ENCODE measurements at regions of chr17 and their contacts with region 1.

Region 1: GRCh38 chr17:82863941-82864774 is 24.3 kb upstream of the ZNF750 start:
- DNase-seq: peak; percentile 85
- ATAC-seq: peak; percentile 83
- H3K4me3 ChIP-seq: peak overlapping the region in 2 of 5 experiments; percentile 9 to 18
- H3K4me3 Mint-ChIP-seq: peak overlapping the region; percentile 85
- H3K27ac ChIP-seq: peak overlapping the region; percentile 3 to 46
- H3K27ac Mint-ChIP-seq: peak overlapping the region; percentile 93
- H3K4me1 ChIP-seq: peaks cover 66 to 71% of the 10 kb centered on the region in 2 donors
- H3K4me1 Mint-ChIP-seq: peaks cover 78% of the 10 kb centered on the region
- H3K27me3 ChIP-seq: peaks cover 0 to 18% (median 0%) of the 10 kb centered on the region in 4 experiments
- H3K27me3 Mint-ChIP-seq: peaks cover 8% of the 10 kb centered on the region
- CTCF ChIP-seq: no peak

Region 2: DNA sequence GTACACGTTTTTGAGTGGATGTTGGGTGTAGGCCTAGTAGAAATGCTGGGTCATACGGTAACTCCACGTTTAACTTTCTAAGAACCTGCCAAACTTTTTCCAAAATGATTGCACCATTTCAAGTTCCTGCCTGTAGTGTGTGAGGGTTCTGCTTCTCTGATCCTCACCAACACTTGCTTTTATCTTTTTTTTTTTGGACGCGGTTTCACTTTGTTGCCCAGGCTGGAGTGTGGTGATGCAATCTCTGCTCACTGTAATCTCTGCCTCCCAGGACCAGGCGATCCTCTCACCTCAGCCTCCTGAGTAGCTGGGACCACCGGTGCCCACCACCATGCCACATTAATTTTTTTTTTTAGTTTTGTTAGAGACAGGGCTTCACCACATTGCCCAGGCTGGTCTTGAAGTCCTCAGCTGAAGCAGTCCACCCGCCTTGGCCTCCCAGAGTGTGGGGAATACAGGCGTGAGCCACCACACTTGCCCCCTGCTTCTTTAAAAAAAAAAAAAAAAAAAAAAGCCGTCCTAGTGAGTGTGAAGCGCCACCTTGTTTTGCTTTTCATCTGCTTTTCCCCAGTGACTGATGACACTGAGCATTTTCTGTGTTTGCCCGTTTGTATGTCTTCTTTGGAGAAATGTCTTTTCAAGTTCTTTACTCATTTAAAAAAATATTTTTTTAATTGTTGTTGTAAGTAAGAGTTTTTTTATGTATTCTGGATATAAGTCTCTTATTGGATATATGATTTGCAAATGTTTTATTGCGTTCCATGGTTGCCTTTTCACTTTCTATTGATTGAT is 47.6 kb before region 1 on chr17:
- CTCF ChIA-PET with region 1: interaction called, 39 read pairs
- POLR2A ChIA-PET with region 1: interaction called, 10 read pairs
- intact Hi-C with region 1: loop called (anchors 1 kb)
- DNase-seq: no peak
- ATAC-seq: no peak
- H3K4me3 ChIP-seq: no peak overlapping the region
- H3K4me3 Mint-ChIP-seq: no peak overlapping the region
- H3K27ac ChIP-seq: no peak overlapping the region
- H3K27ac Mint-ChIP-seq: peak overlapping the region; percentile 20
- H3K4me1 ChIP-seq: peaks cover 24 to 34% of the 10 kb centered on the region in 2 donors
- H3K4me1 Mint-ChIP-seq: peaks cover 34% of the 10 kb centered on the region
- H3K27me3 ChIP-seq: no peaks in the 10 kb centered on the region
- H3K27me3 Mint-ChIP-seq: no peaks in the 10 kb centered on the region
- CTCF ChIP-seq: no peak

Region 3: DNA sequence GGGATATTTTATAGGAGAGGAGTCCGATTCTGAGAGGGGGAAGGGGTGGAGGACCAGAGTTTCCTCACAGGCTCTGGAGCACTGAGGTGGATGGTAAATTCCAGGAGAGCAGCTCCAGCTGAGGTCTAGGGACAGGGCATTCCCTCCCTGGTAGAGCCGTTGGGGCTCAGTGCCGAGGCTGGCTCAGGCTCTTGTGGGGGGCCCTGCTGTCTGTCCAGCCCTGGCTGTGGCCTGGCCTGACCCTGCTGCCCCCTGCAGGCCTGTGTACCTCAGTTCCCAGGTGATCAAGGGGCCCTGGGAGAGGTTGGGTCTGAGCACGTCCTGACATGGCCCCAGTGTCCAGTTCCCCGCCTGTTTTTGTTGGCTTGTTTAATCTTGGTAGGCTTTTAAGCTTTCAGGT is 41.2 kb before region 1 on chr17:
- CTCF ChIA-PET with region 1: interaction called, 39 read pairs
- POLR2A ChIA-PET with region 1: interaction called, 10 read pairs
- intact Hi-C with region 1: loop called (anchors 1 kb)
- DNase-seq: no peak
- ATAC-seq: no peak
- H3K4me3 ChIP-seq: no peak overlapping the region
- H3K4me3 Mint-ChIP-seq: no peak overlapping the region
- H3K27ac ChIP-seq: no peak overlapping the region
- H3K27ac Mint-ChIP-seq: no peak overlapping the region
- H3K4me1 ChIP-seq: peaks cover 18 to 19% of the 10 kb centered on the region in 2 donors
- H3K4me1 Mint-ChIP-seq: peaks cover 24% of the 10 kb centered on the region
- H3K27me3 ChIP-seq: no peaks in the 10 kb centered on the region
- H3K27me3 Mint-ChIP-seq: no peaks in the 10 kb centered on the region
- CTCF ChIP-seq: peak; percentile 9

Region 4: GRCh38 chr17:82836823-82837357 is 27.3 kb before region 1 on chr17:
- CTCF ChIA-PET with region 1: interaction called, 11 read pairs
- POLR2A ChIA-PET with region 1: interaction called, 3 read pairs
- intact Hi-C with region 1: no loop called
- DNase-seq: no peak
- ATAC-seq: no peak
- H3K4me3 ChIP-seq: no peak overlapping the region
- H3K4me3 Mint-ChIP-seq: no peak overlapping the region
- H3K27ac ChIP-seq: no peak overlapping the region
- H3K27ac Mint-ChIP-seq: no peak overlapping the region
- H3K4me1 ChIP-seq: no peaks in the 10 kb centered on the region
- H3K4me1 Mint-ChIP-seq: no peaks in the 10 kb centered on the region
- H3K27me3 ChIP-seq: no peaks in the 10 kb centered on the region
- H3K27me3 Mint-ChIP-seq: no peaks in the 10 kb centered on the region
- CTCF ChIP-seq: no peak

Region 5: DNA sequence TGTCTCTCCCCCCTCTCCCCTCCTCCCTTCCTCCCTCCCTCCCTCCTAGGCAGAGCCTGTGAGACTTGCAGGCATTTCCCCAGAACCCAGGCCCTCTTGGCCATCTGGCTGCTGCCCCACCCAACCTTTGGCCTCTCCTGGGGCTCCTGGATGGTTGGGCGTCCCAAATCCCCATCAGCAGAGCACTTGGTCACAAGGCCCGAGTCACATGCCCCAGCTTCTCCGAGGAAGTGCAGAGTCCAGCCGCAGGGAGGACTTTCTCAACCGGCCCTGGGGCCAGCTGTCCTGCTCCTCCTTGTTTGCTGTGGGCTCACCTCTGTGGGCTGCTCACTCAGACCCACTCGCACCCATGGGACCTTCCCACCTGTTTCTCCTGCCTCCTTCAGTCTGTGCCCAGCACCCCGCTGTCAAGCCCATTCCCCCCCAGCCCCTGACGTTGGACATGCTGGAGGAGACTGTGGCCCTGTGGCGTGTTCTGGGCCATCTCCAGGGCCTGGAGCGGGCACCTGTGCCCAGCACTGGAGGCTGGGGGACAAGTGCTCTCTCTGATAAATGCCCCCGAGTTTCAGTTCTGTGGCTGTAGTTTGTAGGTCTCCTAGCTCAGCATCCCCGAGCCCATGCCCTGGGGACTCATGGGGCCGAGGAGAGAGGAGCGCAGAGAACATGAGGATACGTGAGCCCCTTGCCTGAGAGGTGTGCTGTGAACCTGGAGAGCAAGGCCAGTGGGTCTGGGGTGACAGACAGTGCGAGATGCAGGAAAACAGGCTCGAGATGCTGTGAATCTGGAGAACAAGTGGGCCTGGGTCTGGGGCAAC is 17.9 kb after region 1 on chr17:
- CTCF ChIA-PET with region 1: interaction called, 11 read pairs
- POLR2A ChIA-PET with region 1: interaction called, 12 read pairs
- intact Hi-C with region 1: no loop called
- DNase-seq: no peak
- ATAC-seq: no peak
- H3K4me3 ChIP-seq: no peak overlapping the region
- H3K4me3 Mint-ChIP-seq: peak overlapping the region; percentile 53
- H3K27ac ChIP-seq: no peak overlapping the region
- H3K27ac Mint-ChIP-seq: peak overlapping the region; percentile 68
- H3K4me1 ChIP-seq: peaks cover 46 to 51% of the 10 kb centered on the region in 2 donors
- H3K4me1 Mint-ChIP-seq: peaks cover 52% of the 10 kb centered on the region
- H3K27me3 ChIP-seq: peaks cover 0 to 4% (median 0%) of the 10 kb centered on the region in 4 experiments
- H3K27me3 Mint-ChIP-seq: no peaks in the 10 kb centered on the region
- CTCF ChIP-seq: no peak

Region 6: GRCh38 chr17:82892899-82893565 is 28.9 kb after region 1 on chr17:
- CTCF ChIA-PET with region 1: no interaction called
- POLR2A ChIA-PET with region 1: no interaction called
- intact Hi-C with region 1: no loop called
- DNase-seq: peak; percentile 67
- ATAC-seq: peak; percentile 76
- H3K4me3 ChIP-seq: peak overlapping the region in 1 of 5 experiments; percentile 14
- H3K4me3 Mint-ChIP-seq: peak overlapping the region; percentile 29
- H3K27ac ChIP-seq: peak overlapping the region in 1 of 2 donors; percentile 29
- H3K27ac Mint-ChIP-seq: peak overlapping the region; percentile 75
- H3K4me1 ChIP-seq: peaks cover 19 to 31% of the 10 kb centered on the region in 2 donors
- H3K4me1 Mint-ChIP-seq: peaks cover 19% of the 10 kb centered on the region
- H3K27me3 ChIP-seq: no peaks in the 10 kb centered on the region
- H3K27me3 Mint-ChIP-seq: no peaks in the 10 kb centered on the region
- CTCF ChIP-seq: no peak

Region 7: DNA sequence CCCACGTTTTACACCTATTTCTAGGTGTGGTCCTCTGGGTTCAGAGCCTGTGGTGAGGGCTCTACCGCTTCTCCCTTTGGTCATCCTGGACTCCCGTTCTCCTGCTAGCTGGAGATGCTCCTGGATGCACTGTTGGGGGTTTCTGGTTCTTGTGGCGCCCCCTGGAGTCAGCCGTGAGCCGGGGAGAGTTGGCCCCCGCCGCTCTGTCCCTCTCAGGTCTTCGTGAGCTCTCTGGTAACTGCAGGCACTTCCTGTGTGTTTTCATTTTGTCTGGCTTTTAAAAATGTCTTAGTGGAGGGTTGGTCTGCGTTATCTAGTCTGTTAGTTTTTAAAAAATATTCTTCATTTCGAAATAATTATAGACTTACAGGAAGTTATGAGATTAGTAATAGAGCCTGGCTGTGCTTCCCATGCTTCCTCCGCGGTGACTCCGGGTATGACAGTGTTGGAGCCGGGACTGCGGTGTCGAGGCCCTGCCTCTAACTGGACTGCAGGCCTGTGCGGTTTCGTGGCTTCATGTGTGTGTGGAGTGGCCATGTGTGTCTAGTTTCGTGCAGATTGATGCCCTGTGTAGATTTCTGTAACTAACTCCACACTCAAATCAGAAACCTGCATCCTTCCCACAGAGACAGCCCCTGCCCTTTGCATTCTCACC is 53.7 kb after region 1 on chr17:
- CTCF ChIA-PET with region 1: interaction called, 10 read pairs
- POLR2A ChIA-PET with region 1: interaction called, 3 read pairs
- intact Hi-C with region 1: loop called (anchors 2 kb)
- DNase-seq: no peak
- ATAC-seq: no peak
- H3K4me3 ChIP-seq: no peak overlapping the region
- H3K4me3 Mint-ChIP-seq: no peak overlapping the region
- H3K27ac ChIP-seq: no peak overlapping the region
- H3K27ac Mint-ChIP-seq: no peak overlapping the region
- H3K4me1 ChIP-seq: peaks cover 23 to 24% of the 10 kb centered on the region in 2 donors
- H3K4me1 Mint-ChIP-seq: peaks cover 29% of the 10 kb centered on the region
- H3K27me3 ChIP-seq: no peaks in the 10 kb centered on the region
- H3K27me3 Mint-ChIP-seq: no peaks in the 10 kb centered on the region
- CTCF ChIP-seq: peak; percentile 10

Region 8: DNA sequence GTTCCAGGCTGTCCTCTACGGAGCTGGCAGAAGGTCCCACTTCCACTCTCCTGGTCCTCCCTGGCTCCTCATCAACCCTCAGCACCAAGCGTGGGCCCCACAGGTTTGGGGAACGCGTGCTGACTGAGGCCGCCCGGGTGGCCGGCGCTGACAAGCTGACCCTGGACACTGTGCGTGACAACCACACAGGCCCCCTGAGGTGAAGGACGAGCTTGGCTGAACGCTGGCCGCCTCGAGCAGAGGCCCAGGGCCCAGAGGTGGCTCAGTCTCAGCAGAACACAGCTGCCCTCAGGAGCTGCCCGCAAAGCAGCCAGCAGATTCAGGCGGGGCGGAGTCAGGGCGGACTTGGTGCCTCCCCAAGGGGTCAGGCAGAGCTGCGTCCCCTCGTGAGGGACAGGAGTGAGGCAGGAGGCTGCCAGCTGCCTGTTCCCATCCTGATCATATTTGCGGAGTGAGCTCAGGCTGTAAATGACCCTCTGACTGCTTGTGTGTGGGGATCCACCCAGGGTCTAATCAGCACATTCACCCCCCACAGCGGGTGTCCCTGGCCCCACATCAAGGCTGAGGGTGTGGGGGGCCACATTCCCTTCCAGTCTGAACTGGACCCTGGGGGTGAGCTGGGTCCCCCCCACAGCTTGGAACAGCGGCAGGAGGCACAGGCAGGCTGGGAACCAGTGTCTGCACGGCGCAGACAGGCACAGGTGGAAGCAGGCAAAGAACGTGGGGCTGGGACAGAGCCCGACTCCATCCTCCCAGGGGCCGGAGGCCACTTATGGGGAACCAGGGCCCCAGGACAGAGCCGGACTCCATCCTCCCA is 110.2 kb after region 1 on chr17:
- CTCF ChIA-PET with region 1: no interaction called
- POLR2A ChIA-PET with region 1: no interaction called
- intact Hi-C with region 1: no loop called
- DNase-seq: no peak
- ATAC-seq: no peak
- H3K4me3 ChIP-seq: no peak overlapping the region
- H3K4me3 Mint-ChIP-seq: no peak overlapping the region
- H3K27ac ChIP-seq: no peak overlapping the region
- H3K27ac Mint-ChIP-seq: no peak overlapping the region
- H3K4me1 ChIP-seq: peaks cover 15 to 23% of the 10 kb centered on the region in 2 donors
- H3K4me1 Mint-ChIP-seq: peaks cover 28% of the 10 kb centered on the region
- H3K27me3 ChIP-seq: peaks cover 0 to 9% (median 2%) of the 10 kb centered on the region in 4 experiments
- H3K27me3 Mint-ChIP-seq: no peaks in the 10 kb centered on the region
- CTCF ChIP-seq: no peak

Measured in B cell (primary cell).